ENCODE measurements at regions of chr18 and their contacts with region 1.

Region 1: DNA sequence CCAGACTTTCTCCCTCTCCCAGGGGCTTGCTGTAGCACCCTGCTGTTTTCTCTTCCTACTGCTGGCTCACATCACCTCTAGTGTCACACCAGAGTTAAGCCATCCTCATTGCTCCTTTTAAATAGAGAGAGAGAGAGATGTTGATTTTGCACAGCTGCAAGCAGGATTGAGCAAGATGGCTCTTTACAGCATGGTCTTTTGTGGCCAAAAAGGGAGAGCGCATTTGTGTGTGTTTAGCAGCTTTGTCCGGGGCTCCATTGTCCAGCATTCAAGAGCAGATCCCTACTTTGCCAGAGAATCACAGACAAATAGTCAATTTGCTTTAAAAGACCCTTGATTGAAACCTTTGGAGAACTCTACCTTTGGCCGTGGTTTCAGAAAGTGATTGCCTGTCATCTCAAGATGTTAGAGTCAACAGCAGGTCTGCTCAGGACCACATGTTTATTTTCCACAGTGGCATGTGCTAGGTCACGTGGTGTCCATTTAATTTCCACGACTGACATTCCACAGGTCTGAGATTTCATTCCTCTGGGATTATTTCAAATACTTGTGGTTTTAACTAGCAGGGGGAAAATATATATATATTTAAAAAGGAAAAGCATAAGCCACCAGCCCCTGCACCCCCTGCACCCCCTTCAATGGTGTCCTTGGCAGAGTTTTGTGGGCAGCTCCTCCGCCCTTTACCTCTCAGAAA is 359.9 kb upstream of the SLC14A2 start:
- DNase-seq: peak; percentile 88
- H3K4me3 ChIP-seq: peak overlapping the region; percentile 18; the same call in 1 of the 2 replicates
- H3K27ac ChIP-seq: peak overlapping the region; percentile 93
- H3K27me3 ChIP-seq: no peaks in the 10 kb centered on the region
- CTCF ChIP-seq: peak; percentile 45

Region 2: DNA sequence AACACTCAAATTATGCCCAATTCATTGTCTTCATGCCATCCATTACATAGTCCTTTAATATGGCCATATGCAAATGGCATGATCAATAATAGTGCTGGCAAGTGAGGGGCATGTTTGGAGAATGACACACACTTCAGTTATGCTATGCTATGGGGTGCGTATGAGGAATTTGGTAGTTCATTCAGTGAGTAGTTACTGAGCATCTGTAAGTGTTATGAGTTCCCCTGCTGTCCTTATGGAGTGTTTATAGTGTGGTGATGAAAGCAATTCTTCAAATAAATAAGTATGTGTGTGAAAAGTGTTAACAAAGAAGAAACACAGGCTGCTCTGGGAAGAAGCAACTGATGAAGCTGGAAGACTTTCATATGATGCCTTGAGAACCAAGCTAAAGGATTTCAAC is 23.7 kb before region 1 on chr18:
- CTCF ChIA-PET with region 1: no interaction called
- POLR2A ChIA-PET with region 1: interaction called, 10 read pairs
- DNase-seq: no peak
- H3K4me3 ChIP-seq: no peak overlapping the region
- H3K27ac ChIP-seq: no peak overlapping the region
- H3K27me3 ChIP-seq: no peaks in the 10 kb centered on the region
- CTCF ChIP-seq: no peak